Activated B cell treated with CpG ODN at 0.5 μM for 24 hours (primary cell): ENCODE measurements at regions of chr15 and their contacts with region 1.

Region 1: GRCh38 chr15:76336254-76337058 is at the start of gene ISL2:
- DNase-seq: peak; percentile 45
- ATAC-seq: peak; percentile 43
- H3K4me3 Mint-ChIP-seq: peak within 1 kb of the TSS; percentile 82
- H3K27ac Mint-ChIP-seq: peak within 1 kb of the TSS; percentile 60
- H3K4me1 Mint-ChIP-seq: peaks cover 57% of the 10 kb centered on the region
- H3K27me3 Mint-ChIP-seq: peaks cover 56% of the 10 kb centered on the region
- CTCF ChIP-seq: no peak
- total RNA-seq, gene ISL2: 0.35 and 0.39 TPM in 2 replicates

Region 2: DNA sequence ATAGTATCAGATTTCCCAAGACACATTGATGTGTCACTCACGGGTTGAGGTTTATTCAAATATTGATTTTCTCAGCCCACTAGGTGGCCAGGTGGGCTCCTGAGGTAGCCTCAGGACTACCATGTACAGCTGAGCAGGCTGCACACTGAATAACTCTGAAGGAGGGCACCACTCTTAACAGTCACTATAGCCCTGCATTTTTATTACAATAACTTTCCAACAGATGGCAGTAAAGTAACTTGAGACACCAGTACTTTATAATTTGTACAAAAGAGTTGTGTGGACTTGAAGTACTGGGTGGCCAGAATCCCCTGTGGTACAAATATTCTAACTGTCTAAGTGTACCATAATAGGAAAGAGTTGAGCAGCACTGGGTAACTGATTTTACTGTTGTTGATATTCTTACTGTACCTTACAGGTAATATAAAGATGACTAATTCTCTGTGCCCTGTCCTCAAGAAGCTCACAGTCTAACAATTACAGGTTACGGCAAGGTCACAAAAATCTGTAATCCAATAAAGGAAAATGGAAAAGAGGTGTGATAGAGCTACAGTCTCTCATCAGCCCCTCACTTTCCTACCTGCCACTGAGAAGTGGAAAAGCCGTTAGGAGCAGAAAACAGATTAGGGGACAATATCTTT is 101.2 kb before region 1 on chr15:
- CTCF ChIA-PET with region 1: interaction called, 5 read pairs
- POLR2A ChIA-PET with region 1: no interaction called
- intact Hi-C with region 1: loop called (anchors 2 kb)
- DNase-seq: no peak
- ATAC-seq: peak; percentile 52
- H3K4me3 Mint-ChIP-seq: no peak overlapping the region
- H3K27ac Mint-ChIP-seq: no peak overlapping the region
- H3K4me1 Mint-ChIP-seq: no peaks in the 10 kb centered on the region
- H3K27me3 Mint-ChIP-seq: no peaks in the 10 kb centered on the region
- CTCF ChIP-seq: no peak

Region 3: GRCh38 chr15:76363224-76363623 is 26.8 kb after region 1 on chr15:
- CTCF ChIA-PET with region 1: no interaction called
- POLR2A ChIA-PET with region 1: no interaction called
- intact Hi-C with region 1: no loop called
- DNase-seq: no peak
- ATAC-seq: no peak
- H3K4me3 Mint-ChIP-seq: no peak overlapping the region
- H3K27ac Mint-ChIP-seq: no peak overlapping the region
- H3K4me1 Mint-ChIP-seq: no peaks in the 10 kb centered on the region
- H3K27me3 Mint-ChIP-seq: no peaks in the 10 kb centered on the region
- CTCF ChIP-seq: no peak

Region 4: GRCh38 chr15:76576523-76577279 is 240.2 kb after region 1 on chr15:
- CTCF ChIA-PET with region 1: no interaction called
- POLR2A ChIA-PET with region 1: interaction called, 5 read pairs
- intact Hi-C with region 1: loop called (anchors 10 kb)
- DNase-seq: no peak
- ATAC-seq: peak; percentile 50
- H3K4me3 Mint-ChIP-seq: peak overlapping the region; percentile 26
- H3K27ac Mint-ChIP-seq: peak overlapping the region; percentile 89
- H3K4me1 Mint-ChIP-seq: peaks cover 36% of the 10 kb centered on the region
- H3K27me3 Mint-ChIP-seq: no peaks in the 10 kb centered on the region
- CTCF ChIP-seq: no peak

Region 5: GRCh38 chr15:76823890-76824289 is 487.4 kb after region 1 on chr15:
- CTCF ChIA-PET with region 1: no interaction called
- POLR2A ChIA-PET with region 1: no interaction called
- intact Hi-C with region 1: no loop called
- DNase-seq: no peak
- ATAC-seq: no peak
- H3K4me3 Mint-ChIP-seq: no peak overlapping the region
- H3K27ac Mint-ChIP-seq: no peak overlapping the region
- H3K4me1 Mint-ChIP-seq: peaks cover 5% of the 10 kb centered on the region
- H3K27me3 Mint-ChIP-seq: no peaks in the 10 kb centered on the region
- CTCF ChIP-seq: no peak

Region 6: DNA sequence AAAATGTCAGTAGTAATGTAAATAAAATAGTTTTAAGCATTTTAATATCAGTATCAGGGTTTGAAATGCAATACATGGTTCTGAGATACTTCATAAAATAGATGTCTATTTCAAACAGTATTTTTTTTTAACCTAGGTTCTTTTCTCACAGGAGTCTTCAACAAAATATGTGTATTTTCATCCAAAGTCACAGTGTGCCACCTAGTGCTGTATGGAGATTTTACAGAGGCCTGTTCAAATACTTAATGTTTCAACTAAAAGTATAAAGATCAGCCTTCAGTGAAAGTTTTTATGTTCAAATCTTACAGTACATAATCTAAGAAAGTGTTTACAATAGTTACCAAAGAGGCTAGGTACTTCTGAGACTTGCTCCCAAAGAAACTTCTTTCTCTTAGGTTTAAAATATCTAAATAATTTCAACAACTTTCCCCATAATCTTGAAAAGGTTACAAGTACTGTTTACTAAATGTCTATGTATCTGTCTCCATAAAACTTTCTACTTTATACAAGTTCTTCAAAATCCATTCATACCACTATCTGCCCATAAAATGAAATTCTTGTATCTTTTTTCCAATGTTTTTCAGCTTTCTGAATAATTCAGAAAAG is 530.4 kb after region 1 on chr15:
- CTCF ChIA-PET with region 1: no interaction called
- POLR2A ChIA-PET with region 1: no interaction called
- intact Hi-C with region 1: loop called (anchors 10 kb)
- DNase-seq: no peak
- ATAC-seq: no peak
- H3K4me3 Mint-ChIP-seq: no peak overlapping the region
- H3K27ac Mint-ChIP-seq: no peak overlapping the region
- H3K4me1 Mint-ChIP-seq: peaks cover 16% of the 10 kb centered on the region
- H3K27me3 Mint-ChIP-seq: no peaks in the 10 kb centered on the region
- CTCF ChIP-seq: no peak